ENCODE measurements at regions of chr10 and their contacts with region 1.

Region 1: GRCh38 chr10:35336084-35336831 is at the start of gene CCNY:
- DNase-seq: peak; percentile 93
- ATAC-seq: peak; percentile 63
- H3K4me3 ChIP-seq: peak within 1 kb of the TSS; percentile 78
- H3K27ac ChIP-seq: peak within 1 kb of the TSS; percentile 13
- H3K4me1 ChIP-seq: peaks cover 64% of the 10 kb centered on the region
- H3K27me3 ChIP-seq: no peaks in the 10 kb centered on the region
- CTCF ChIP-seq: no peak
- total RNA-seq, gene CCNY: 145 and 146 TPM in 2 replicates

Region 2: GRCh38 chr10:35126530-35127296 is 209.5 kb before region 1 on chr10 and contains the start of gene CREM:
- CTCF ChIA-PET with region 1: no interaction called
- POLR2A ChIA-PET with region 1: no interaction called
- intact Hi-C with region 1: loop called (anchors 5 kb)
- DNase-seq: peak; percentile 100
- ATAC-seq: peak; percentile 80
- H3K4me3 ChIP-seq: peak within 1 kb of the TSS; percentile 74
- H3K27ac ChIP-seq: peak within 1 kb of the TSS; percentile 87
- H3K4me1 ChIP-seq: peaks cover 41% of the 10 kb centered on the region
- H3K27me3 ChIP-seq: no peaks in the 10 kb centered on the region
- CTCF ChIP-seq: peak; percentile 99
- total RNA-seq, gene CREM: 150 and 195 TPM in 2 replicates

Region 3: DNA sequence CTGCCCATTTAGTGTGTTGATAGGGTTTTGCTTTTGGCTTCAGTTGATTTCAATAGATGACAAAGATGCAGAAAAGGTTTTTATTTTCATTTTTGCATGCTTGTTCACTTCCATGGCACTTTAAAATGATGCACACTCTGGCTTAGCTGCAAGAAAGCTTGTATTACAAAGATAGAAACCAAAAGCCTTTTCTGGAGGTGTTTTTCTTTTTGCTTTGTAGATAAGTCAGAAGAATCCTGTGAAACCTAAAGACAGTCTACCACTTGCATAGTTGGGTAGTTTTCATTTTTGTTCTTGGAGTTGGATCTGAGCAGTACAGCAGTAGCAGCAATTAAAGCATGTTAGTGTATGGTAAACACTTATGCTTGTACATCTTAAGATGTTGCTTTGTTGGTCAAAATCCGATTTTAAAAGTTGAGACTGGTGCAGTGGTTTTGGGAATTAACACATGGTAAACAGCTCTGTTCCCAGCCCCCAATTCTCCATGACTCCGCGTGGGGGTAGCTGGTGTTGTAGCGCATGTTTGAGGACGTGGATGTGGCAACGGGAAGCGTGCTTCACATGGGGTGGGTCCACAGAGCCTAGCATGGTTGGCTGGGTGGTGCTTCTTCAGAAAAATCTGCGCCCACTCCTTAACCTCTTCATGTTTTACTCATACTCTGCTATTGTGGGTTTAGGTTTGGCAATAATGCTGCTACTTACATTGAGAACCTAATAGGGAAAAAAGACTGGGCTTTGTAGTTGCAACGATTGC is 19.9 kb after region 1 on chr10:
- CTCF ChIA-PET with region 1: no interaction called
- POLR2A ChIA-PET with region 1: no interaction called
- intact Hi-C with region 1: loop called (anchors 2 kb)
- DNase-seq: no peak
- ATAC-seq: no peak
- H3K4me3 ChIP-seq: no peak overlapping the region
- H3K27ac ChIP-seq: no peak overlapping the region
- H3K4me1 ChIP-seq: no peaks in the 10 kb centered on the region; the same call in 1 of the 2 replicates
- H3K27me3 ChIP-seq: no peaks in the 10 kb centered on the region
- CTCF ChIP-seq: no peak

Region 4: DNA sequence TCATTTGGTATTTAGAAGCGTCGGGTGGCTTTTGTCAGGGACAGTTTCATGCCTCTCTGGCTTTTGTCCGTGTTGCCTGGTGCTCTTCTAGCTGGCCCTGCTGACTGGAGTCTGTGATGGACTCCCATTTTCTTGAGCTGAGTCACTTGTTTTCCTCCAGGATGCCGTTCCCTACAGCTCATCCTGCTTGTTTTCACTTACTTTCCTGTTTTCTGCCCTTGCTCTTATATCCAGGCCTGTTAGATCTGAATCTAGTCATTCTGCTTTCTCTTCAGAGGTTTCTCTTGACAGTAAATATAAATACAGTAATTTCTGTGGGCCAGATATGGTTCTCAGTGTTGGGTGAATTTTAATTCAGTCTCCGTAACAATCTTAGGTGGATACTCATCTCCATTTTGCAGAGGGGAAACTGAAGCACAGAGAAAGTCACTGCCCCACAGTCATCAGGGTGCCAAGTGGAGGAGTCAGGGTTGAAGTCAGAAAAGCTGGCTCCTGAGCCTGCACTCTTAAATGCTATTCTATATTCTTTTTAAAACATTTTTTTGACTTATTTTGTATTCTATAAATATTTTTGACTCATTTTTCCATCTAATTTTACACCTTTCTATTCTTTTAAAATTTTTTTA is 85.4 kb after region 1 on chr10:
- CTCF ChIA-PET with region 1: interaction called, 3 read pairs
- POLR2A ChIA-PET with region 1: interaction called, 3 read pairs
- intact Hi-C with region 1: loop called (anchors 1 kb)
- DNase-seq: peak; percentile 99
- ATAC-seq: peak; percentile 90
- H3K4me3 ChIP-seq: peak overlapping the region; percentile 37; the same call in 1 of the 2 replicates
- H3K27ac ChIP-seq: peak overlapping the region; percentile 62
- H3K4me1 ChIP-seq: peaks cover 63% of the 10 kb centered on the region
- H3K27me3 ChIP-seq: no peaks in the 10 kb centered on the region
- CTCF ChIP-seq: no peak

Region 5: GRCh38 chr10:35495521-35496119 is 159.4 kb after region 1 on chr10:
- CTCF ChIA-PET with region 1: no interaction called
- POLR2A ChIA-PET with region 1: interaction called, 4 read pairs
- intact Hi-C with region 1: loop called (anchors 1 kb)
- DNase-seq: no peak
- ATAC-seq: no peak
- H3K4me3 ChIP-seq: no peak overlapping the region
- H3K27ac ChIP-seq: no peak overlapping the region
- H3K4me1 ChIP-seq: peaks cover 21% of the 10 kb centered on the region
- H3K27me3 ChIP-seq: no peaks in the 10 kb centered on the region
- CTCF ChIP-seq: no peak

Measured in PC-3 (cell line).